ENCODE measurements at regions of chr1 and their contacts with region 1.

Region 1: DNA sequence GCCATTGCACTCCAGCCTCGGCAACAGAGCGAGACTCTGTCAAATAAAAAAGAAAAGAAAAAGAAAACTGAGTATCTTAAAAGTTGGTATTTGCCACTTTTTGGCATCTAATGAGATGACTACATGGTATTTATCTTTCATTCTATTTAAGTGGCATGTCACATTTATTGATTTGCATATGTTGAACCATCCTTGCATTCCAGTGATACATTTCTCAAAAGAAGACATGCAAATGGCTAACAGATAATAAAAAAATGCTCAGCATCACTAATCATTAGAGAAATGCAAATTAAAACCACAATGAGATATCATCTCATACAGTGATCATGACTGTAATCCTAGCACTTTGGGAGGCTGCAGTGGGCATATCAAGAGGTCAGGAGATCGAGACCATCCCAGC is 28.1 kb downstream of the SFPQ start:
- DNase-seq: no peak
- ATAC-seq: no peak
- H3K4me3 ChIP-seq: no peak overlapping the region
- H3K27ac ChIP-seq: no peak overlapping the region
- H3K4me1 ChIP-seq: no peaks in the 10 kb centered on the region
- H3K27me3 ChIP-seq: no peaks in the 10 kb centered on the region
- CTCF ChIP-seq: no peak

Region 2: GRCh38 chr1:34162852-34163766 is 1001.8 kb before region 1 on chr1:
- CTCF ChIA-PET with region 1: no interaction called
- POLR2A ChIA-PET with region 1: no interaction called
- in situ Hi-C with region 1: no loop called
- intact Hi-C with region 1: no loop called
- DNase-seq: no peak
- ATAC-seq: no peak
- H3K4me3 ChIP-seq: no peak overlapping the region
- H3K27ac ChIP-seq: no peak overlapping the region
- H3K4me1 ChIP-seq: no peaks in the 10 kb centered on the region
- H3K27me3 ChIP-seq: peaks cover 7% of the 10 kb centered on the region
- CTCF ChIP-seq: no peak

Region 3: GRCh38 chr1:34865981-34866761 is 298.7 kb before region 1 on chr1:
- CTCF ChIA-PET with region 1: no interaction called
- POLR2A ChIA-PET with region 1: no interaction called
- in situ Hi-C with region 1: no loop called
- intact Hi-C with region 1: no loop called
- DNase-seq: peak; percentile 62
- ATAC-seq: peak; percentile 85
- H3K4me3 ChIP-seq: peak overlapping the region; percentile 53 to 66
- H3K27ac ChIP-seq: peak overlapping the region; percentile 72
- H3K4me1 ChIP-seq: no peaks in the 10 kb centered on the region
- H3K27me3 ChIP-seq: peaks cover 2% of the 10 kb centered on the region
- CTCF ChIP-seq: peak; percentile 99

Region 4: DNA sequence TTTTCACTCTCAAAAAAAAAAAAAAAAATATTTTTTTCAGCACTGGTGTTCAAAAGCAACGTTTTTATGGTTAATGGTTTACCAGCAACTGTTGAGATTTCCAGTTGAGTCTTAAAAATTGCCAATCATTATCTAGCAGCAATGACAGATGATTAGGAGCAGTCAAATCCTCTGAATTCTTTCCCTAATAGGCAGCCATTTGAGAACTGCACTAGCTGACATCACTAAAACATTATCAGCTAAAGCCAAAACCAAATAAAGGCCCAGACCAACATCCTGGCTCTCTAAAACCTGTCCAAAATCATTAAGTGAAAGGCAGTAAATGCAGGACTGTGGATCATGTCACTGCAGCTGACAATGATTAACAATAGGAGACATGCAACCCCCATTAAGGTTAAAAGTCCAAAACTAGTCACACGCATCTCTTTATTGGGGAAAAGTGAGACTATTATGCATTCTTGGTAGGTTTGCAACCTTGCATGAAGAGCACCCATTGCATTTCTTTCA is 14.0 kb after region 1 on chr1:
- CTCF ChIA-PET with region 1: no interaction called
- POLR2A ChIA-PET with region 1: no interaction called
- in situ Hi-C with region 1: no loop called
- intact Hi-C with region 1: no loop called
- DNase-seq: no peak
- ATAC-seq: no peak
- H3K4me3 ChIP-seq: no peak overlapping the region
- H3K27ac ChIP-seq: no peak overlapping the region
- H3K4me1 ChIP-seq: peaks cover 7% of the 10 kb centered on the region
- H3K27me3 ChIP-seq: no peaks in the 10 kb centered on the region
- CTCF ChIP-seq: no peak

Region 5: DNA sequence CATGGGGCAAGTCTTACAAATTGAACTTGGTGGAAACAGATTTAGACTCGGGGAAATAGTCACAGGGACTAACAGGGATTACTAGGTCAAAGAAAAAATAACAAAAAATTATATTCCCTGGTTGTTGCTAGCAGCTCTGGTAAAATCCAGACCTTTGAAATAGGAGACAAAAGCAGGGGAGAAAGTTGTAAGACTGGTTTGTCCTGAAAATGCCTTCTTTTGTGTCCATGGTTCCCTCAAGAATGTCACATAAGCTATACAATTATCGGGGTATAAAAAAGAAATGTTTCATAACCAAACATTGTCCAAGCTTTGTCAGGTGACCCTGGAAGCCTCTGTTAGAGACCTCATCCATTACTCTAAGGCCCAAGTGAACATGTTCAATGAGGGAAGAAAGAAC is 359.2 kb after region 1 on chr1:
- CTCF ChIA-PET with region 1: interaction called, 12 read pairs
- POLR2A ChIA-PET with region 1: no interaction called
- in situ Hi-C with region 1: no loop called
- intact Hi-C with region 1: no loop called
- DNase-seq: no peak
- ATAC-seq: no peak
- H3K4me3 ChIP-seq: no peak overlapping the region
- H3K27ac ChIP-seq: no peak overlapping the region
- H3K4me1 ChIP-seq: no peaks in the 10 kb centered on the region
- H3K27me3 ChIP-seq: no peaks in the 10 kb centered on the region
- CTCF ChIP-seq: no peak

Measured in Panc1 (cell line).